Mammary epithelial cell (primary cell): ENCODE measurements at regions of chr13 and their contacts with region 1.

Region 1: GRCh38 chr13:45078003-45078402 is 42.3 kb upstream of the GTF2F2 start:
- DNase-seq: no peak
- H3K4me3 ChIP-seq: no peak overlapping the region
- H3K27ac ChIP-seq: no peak overlapping the region
- H3K4me1 ChIP-seq: peaks cover 6% of the 10 kb centered on the region
- H3K27me3 ChIP-seq: no peaks in the 10 kb centered on the region
- CTCF ChIP-seq: no peak

Region 2: DNA sequence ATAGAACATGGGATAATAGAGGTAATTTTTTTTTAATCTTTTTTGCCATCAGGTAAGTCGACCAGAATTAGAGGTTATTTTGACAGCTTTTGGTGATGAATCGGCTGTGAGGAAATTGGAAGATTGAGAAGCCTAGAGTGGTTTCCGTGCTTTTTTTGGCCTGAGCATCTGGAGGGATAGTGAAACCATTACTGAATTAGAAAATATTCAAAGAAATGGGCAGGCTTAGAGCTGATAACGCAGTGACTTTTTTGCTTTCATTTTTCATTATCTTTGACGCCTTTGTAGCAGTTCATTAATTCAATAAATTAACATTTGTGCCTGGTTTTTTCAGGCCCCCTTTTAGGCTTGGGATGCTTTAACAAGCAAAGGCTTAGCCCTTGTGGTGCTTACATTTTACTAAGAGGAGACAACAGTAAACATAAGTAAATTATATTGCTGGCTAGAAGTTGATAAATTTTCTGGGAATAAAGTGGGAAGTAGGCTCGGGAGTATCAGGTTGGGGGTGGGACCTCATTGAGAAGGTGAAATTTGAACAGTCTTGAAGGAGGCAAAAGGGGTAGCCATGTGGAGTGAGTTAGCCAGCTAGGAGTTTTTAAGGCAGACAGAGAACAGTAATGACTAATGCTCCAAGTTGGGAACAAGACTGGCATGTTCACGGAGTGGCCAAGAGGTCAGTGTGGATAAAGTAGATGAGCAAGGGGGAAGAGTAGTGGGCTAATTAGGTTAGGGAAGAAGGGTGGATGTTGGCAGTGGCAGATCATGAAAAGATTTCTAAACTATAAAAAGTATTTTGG is 78.8 kb after region 1 on chr13:
- CTCF ChIA-PET with region 1: no interaction called
- dilution Hi-C with region 1: loop called (anchors 5 kb)
- in situ Hi-C with region 1: no loop called
- intact Hi-C with region 1: no loop called
- DNase-seq: no peak
- H3K4me3 ChIP-seq: no peak overlapping the region
- H3K27ac ChIP-seq: no peak overlapping the region
- H3K4me1 ChIP-seq: no peaks in the 10 kb centered on the region
- H3K27me3 ChIP-seq: no peaks in the 10 kb centered on the region
- CTCF ChIP-seq: no peak